Aorta (tissue), 5 donors: ENCODE measurements at regions of chr3 and their contacts with region 1.

Region 1: GRCh38 chr3:30779686-30780287 is 114.7 kb downstream of the GADL1 start:
- DNase-seq: no peak
- ATAC-seq: peak; percentile 69
- H3K4me3 ChIP-seq: no peak overlapping the region
- H3K27ac ChIP-seq: no peak overlapping the region
- H3K4me1 ChIP-seq: no peaks in the 10 kb centered on the region
- H3K27me3 ChIP-seq: no peaks in the 10 kb centered on the region

Region 2: GRCh38 chr3:30915782-30916181 is 136.0 kb after region 1 on chr3:
- intact Hi-C with region 1: loop called in 1 of 2 experiments (anchors 10 kb)
- DNase-seq: no peak
- ATAC-seq: no peak
- H3K4me3 ChIP-seq: no peak overlapping the region
- H3K27ac ChIP-seq: no peak overlapping the region
- H3K4me1 ChIP-seq: no peaks in the 10 kb centered on the region
- H3K27me3 ChIP-seq: no peaks in the 10 kb centered on the region

Region 3: DNA sequence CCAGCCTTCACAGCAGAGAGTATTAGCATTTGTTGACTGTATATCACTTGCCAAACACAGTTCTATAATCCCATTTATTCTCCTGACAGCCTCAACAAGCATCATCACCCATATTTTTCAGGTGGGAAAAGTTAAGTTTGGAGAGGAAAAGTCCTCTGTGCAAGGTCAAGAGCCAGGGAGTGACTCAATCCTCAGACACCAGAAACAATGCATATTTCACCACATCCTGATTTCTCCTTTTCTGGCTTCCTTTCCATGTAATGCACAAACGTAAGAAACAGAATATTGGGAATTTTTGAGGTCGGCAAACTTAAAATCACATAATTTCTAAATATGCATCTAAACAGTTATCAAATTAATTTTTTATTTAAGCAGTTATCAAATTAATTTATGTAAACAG is 230.7 kb after region 1 on chr3:
- intact Hi-C with region 1: loop called in 1 of 2 experiments (anchors 10 kb)
- DNase-seq: no peak
- ATAC-seq: no peak
- H3K4me3 ChIP-seq: no peak overlapping the region
- H3K27ac ChIP-seq: no peak overlapping the region
- H3K4me1 ChIP-seq: no peaks in the 10 kb centered on the region
- H3K27me3 ChIP-seq: no peaks in the 10 kb centered on the region

Region 4: DNA sequence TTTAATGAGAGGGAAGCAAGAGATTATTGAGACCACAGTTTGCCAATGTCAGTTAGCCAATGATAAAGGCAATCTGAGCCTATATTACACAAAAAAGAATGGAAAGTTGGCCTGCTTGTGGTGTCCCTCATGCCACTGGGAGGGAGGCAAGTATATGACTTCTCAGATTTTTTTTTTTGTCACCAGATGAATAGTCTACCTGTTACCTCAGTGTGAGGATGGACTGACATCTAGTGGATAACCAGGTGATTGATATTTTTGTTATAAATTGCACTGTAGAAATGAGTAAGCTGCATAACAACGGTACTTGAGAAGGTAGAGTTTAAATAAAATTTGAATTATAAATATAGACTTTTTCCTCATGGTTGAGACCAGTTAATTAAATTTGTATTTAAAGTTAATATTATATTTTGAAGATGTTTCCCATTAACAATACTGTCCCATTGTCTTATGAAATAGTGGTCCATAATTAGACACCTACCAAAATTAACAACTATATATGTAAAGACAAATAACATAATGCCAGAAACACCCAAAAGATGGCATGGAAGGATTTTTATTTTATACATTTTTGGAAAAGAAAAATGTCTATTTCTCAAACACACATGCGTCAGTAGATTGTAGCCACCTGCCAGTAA is 352.5 kb after region 1 on chr3:
- intact Hi-C with region 1: loop called in 1 of 2 experiments (anchors 10 kb)
- DNase-seq: no peak
- ATAC-seq: no peak
- H3K4me3 ChIP-seq: no peak overlapping the region
- H3K27ac ChIP-seq: no peak overlapping the region
- H3K4me1 ChIP-seq: no peaks in the 10 kb centered on the region
- H3K27me3 ChIP-seq: no peaks in the 10 kb centered on the region

Region 5: GRCh38 chr3:31754575-31755278 is 974.9 kb after region 1 on chr3:
- intact Hi-C with region 1: loop called in 1 of 2 experiments (anchors 10 kb)
- DNase-seq: no peak
- ATAC-seq: no peak
- H3K4me3 ChIP-seq: no peak overlapping the region
- H3K27ac ChIP-seq: no peak overlapping the region
- H3K4me1 ChIP-seq: peaks cover 2 to 9% of the 10 kb centered on the region in 2 donors
- H3K27me3 ChIP-seq: no peaks in the 10 kb centered on the region